ENCODE measurements at regions of chr10 and their contacts with region 1.

Region 1: GRCh38 chr10:117537436-117537903 is 5.1 kb upstream of the EMX2 start:
- DNase-seq: peak; percentile 77
- H3K4me3 Mint-ChIP-seq: no peak overlapping the region
- H3K27ac Mint-ChIP-seq: no peak overlapping the region
- H3K4me1 Mint-ChIP-seq: peaks cover 2% of the 10 kb centered on the region
- H3K27me3 Mint-ChIP-seq: peaks cover 86% of the 10 kb centered on the region

Region 2: GRCh38 chr10:116272440-116273283 is 1264.8 kb before region 1 on chr10 and contains the start of gene GFRA1:
- intact Hi-C with region 1: loop called (anchors 10 kb)
- DNase-seq: no peak
- H3K4me3 Mint-ChIP-seq: peak within 1 kb of the TSS; percentile 39
- H3K27ac Mint-ChIP-seq: no peak within 1 kb of the TSS
- H3K4me1 Mint-ChIP-seq: peaks cover 3% of the 10 kb centered on the region
- H3K27me3 Mint-ChIP-seq: peaks cover 65% of the 10 kb centered on the region
- total RNA-seq, gene GFRA1: not detected in 2 replicates

Region 3: DNA sequence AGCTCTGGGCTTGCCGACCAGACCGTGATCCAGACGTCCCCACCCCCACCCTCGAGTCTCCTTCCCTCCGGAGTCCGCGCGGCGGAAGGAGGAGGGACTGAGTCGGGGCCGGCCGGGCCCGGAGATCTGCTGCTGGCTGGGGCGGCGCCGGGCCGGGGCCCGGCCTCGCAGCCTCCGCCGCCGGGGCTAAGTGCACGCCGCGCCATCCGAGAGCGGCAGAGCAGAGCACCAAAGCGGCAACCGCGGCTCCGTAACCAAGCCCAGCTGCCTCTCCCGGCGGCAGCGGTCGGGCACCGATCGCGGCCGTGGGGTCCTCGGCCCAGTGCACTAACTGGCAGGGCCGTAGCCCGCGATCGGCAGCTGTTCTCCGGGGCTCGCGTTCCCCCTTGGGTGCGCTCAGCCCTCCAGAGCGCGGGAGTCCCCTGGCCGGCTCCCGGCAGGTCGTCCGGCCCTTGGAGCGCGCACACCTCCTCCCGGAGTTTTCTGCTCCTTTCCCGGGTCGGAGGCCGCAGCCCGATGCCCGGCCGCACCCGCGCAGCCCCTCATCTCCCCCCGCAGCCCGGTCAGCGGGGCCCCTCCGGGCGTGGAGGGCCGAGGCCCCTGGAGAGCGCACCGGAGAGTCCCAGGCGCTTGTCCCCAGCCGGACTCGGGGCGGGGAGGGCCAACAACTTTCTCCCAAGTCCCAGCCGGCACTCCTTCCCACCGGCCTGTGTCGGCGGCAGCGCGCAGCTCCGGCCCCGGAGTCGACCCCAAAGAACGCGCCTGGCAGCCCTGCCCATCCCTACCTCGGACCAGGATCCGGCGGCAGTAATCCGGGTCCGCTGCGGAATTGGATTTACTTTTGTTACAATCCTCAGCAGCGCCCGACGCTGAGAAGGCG is 400.2 kb before region 1 on chr10:
- intact Hi-C with region 1: no loop called
- DNase-seq: peak; percentile 56
- H3K4me3 Mint-ChIP-seq: no peak overlapping the region
- H3K27ac Mint-ChIP-seq: peak overlapping the region; percentile 72
- H3K4me1 Mint-ChIP-seq: peaks cover 8% of the 10 kb centered on the region
- H3K27me3 Mint-ChIP-seq: peaks cover 74% of the 10 kb centered on the region

Region 4: GRCh38 chr10:117167789-117168674 is 369.4 kb before region 1 on chr10:
- intact Hi-C with region 1: loop called (anchors 5 kb)
- DNase-seq: peak; percentile 89
- H3K4me3 Mint-ChIP-seq: no peak overlapping the region
- H3K27ac Mint-ChIP-seq: no peak overlapping the region
- H3K4me1 Mint-ChIP-seq: peaks cover 8% of the 10 kb centered on the region
- H3K27me3 Mint-ChIP-seq: peaks cover 80% of the 10 kb centered on the region

Region 5: GRCh38 chr10:117830787-117831212 is 293.3 kb after region 1 on chr10:
- intact Hi-C with region 1: loop called (anchors 10 kb)
- DNase-seq: peak; percentile 79
- H3K4me3 Mint-ChIP-seq: peak overlapping the region; percentile 62
- H3K27ac Mint-ChIP-seq: peak overlapping the region; percentile 73
- H3K4me1 Mint-ChIP-seq: peaks cover 14% of the 10 kb centered on the region
- H3K27me3 Mint-ChIP-seq: peaks cover 1% of the 10 kb centered on the region

Region 6: DNA sequence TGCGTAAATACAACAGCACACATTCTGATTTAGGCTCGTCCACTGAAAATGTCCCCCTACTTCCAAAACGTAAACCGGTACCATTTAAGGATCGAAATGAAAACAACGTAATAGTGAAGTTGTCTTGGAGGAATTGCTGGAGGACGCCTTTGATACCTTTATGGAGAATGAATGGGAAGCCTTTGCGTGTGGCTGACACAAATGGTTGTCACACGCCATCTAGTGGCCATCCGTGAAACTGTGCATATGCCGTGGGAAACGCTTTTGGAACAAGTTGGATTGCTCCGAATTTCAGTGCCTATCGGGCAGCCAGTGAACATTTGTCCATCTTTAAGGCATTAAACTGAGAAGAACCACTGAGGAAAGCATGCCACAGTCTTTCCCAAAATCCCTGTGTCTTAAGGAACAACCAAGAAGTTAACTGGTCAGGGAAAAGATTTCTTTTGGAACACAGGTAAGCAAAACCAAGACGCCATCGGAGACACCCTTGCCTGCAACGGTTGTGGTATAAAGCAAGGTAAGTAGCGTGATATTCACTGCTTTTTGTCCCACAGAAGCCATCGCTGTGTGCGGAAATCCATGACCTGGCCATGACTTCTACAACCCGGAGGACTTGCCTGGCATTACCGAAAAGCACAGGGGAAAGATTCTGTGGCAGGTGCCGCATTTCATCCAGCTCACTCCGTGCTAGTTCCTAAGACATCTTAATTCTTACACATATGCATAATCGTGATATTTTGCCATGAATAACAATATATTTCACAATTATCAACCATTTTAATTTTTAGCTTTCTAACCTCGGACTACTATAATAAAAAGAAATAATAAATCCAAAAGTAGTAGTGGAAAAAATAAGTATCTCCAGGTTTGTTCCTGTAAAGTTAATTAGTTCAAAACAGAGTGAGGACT is 704.0 kb after region 1 on chr10:
- intact Hi-C with region 1: loop called (anchors 1 kb)
- DNase-seq: peak; percentile 89
- H3K4me3 Mint-ChIP-seq: no peak overlapping the region
- H3K27ac Mint-ChIP-seq: no peak overlapping the region
- H3K4me1 Mint-ChIP-seq: peaks cover 1% of the 10 kb centered on the region
- H3K27me3 Mint-ChIP-seq: peaks cover 41% of the 10 kb centered on the region

Measured in activated CD4-positive, alpha-beta T cell treated with anti-CD3 and anti-CD28 coated beads, Interleukin-2, amount 10 ng/mL, durations not matched to agents 24 days and 14 days (primary cell).